ENCODE measurements at regions of chr7 and their contacts with region 1.

Region 1: DNA sequence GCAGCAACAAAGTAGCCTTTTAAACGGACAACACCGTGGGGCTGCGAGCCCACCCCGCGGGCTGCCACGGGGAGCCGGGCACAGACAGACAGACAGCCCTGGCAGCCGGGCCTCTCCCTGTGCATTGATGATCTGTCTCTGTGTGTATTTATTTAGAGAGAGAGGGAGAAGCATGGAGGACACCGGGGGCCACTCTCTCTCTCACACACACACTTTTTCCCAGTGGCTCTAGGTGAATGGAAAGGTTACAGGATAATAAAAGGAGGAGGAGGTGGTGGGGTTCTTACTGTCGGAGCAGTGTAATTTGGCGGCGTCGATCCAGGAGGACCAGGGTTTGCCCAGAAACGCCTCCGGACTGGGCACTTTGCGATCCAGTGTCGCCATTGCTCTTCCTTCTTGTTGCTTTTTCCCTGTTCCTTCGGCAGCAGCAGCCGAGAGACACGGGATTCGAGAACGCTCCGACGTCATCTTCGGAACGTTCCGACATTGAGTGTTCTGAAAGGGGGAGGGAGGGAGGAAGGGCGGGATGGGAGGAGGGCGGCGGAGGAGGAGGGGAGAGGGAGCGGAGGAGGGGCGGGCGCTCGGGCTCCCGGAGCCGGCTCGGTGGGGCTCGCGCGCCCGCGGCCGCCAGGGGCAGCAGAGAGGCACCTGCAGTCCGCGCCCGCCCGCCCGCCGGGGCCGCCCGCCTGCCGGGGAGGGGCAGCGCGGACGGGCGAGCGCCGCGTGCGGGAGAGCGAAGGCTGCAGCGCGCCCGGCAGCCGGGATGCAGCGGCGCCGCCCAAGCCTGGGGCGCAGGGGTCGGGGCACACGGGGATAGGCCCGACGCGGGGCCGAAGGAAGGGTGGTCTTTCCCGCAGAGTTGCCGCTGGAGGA is at the start of gene ATXN7L1:
- DNase-seq: peak; percentile 94 to 96 (median 95)
- H3K4me3 ChIP-seq: peak within 1 kb of the TSS; percentile 88
- H3K27ac ChIP-seq: peak within 1 kb of the TSS; percentile 54 to 63
- H3K4me1 ChIP-seq: peaks cover 8% of the 10 kb centered on the region
- H3K27me3 ChIP-seq: no peaks in the 10 kb centered on the region
- CTCF ChIP-seq: peak in 2 of 3 donors; percentile 60 to 68
- EP300 ChIP-seq: no peak
- POLR2A ChIP-seq: peak; percentile 48
- total RNA-seq, gene ATXN7L1: 5.6 to 17.6 (median 11.4) TPM

Region 2: DNA sequence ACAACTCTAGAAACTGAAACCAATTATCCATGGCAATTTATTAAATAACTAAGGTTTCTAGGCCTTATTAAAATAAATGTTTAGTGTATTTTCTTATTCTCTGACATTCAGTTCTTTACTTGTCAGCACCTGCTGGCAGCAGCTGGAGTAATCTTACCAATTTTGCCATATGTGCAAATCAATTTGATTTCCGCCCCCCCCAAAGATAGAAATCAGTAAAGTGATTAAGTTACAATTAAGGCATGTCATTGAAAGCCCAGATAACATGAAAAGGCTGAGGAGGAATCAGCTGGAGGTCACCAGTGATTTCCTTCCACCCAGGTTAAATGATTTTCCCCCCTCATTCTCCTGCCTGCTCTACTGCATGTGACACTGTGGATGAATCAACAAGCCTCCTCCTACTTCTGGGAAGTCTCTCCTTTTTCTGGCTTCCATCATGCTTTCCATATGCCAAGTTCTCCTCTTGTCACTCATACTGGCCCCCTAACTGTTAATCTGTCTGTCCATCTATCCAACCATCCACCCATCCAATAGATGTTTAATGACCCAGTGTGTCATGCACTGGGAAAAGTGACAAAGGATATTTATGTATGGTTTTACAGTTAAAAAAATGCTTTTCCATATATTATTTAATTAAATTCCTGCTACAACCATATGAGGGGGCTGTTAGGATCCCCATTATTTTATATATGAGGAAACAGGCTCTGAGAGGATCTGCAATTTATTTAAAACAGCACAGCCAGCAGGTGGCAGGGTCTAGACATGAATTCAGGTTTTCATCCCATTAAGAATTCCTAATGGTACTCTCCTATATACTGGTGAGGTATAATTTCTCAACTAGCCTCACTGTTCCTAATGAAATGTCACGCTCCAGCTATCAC is 116.4 kb before region 1 on chr7:
- intact Hi-C with region 1: loop called in 1 of 4 experiments (anchors 10 kb)
- DNase-seq: peak; percentile 52 to 73 (median 60)
- H3K4me3 ChIP-seq: no peak overlapping the region
- H3K27ac ChIP-seq: no peak overlapping the region
- H3K4me1 ChIP-seq: peaks cover 4% of the 10 kb centered on the region
- H3K27me3 ChIP-seq: no peaks in the 10 kb centered on the region
- CTCF ChIP-seq: peak; percentile 55 to 77 (median 67)
- EP300 ChIP-seq: no peak
- POLR2A ChIP-seq: no peak

Region 3: GRCh38 chr7:105838627-105839231 is 37.6 kb before region 1 on chr7:
- intact Hi-C with region 1: no loop called
- DNase-seq: peak; percentile 27 to 58 (median 37)
- H3K4me3 ChIP-seq: no peak overlapping the region
- H3K27ac ChIP-seq: no peak overlapping the region
- H3K4me1 ChIP-seq: peaks cover 7% of the 10 kb centered on the region
- H3K27me3 ChIP-seq: no peaks in the 10 kb centered on the region
- CTCF ChIP-seq: no peak
- EP300 ChIP-seq: no peak
- POLR2A ChIP-seq: no peak